Mammary epithelial cell (primary cell): ENCODE measurements at regions of chr6 and their contacts with region 1.

Region 1: GRCh38 chr6:34067814-34068213 is 78.1 kb downstream of the GRM4 start:
- DNase-seq: no peak
- H3K4me3 ChIP-seq: no peak overlapping the region
- H3K27ac ChIP-seq: no peak overlapping the region
- H3K4me1 ChIP-seq: no peaks in the 10 kb centered on the region
- H3K27me3 ChIP-seq: peaks cover 14% of the 10 kb centered on the region
- CTCF ChIP-seq: no peak

Region 2: DNA sequence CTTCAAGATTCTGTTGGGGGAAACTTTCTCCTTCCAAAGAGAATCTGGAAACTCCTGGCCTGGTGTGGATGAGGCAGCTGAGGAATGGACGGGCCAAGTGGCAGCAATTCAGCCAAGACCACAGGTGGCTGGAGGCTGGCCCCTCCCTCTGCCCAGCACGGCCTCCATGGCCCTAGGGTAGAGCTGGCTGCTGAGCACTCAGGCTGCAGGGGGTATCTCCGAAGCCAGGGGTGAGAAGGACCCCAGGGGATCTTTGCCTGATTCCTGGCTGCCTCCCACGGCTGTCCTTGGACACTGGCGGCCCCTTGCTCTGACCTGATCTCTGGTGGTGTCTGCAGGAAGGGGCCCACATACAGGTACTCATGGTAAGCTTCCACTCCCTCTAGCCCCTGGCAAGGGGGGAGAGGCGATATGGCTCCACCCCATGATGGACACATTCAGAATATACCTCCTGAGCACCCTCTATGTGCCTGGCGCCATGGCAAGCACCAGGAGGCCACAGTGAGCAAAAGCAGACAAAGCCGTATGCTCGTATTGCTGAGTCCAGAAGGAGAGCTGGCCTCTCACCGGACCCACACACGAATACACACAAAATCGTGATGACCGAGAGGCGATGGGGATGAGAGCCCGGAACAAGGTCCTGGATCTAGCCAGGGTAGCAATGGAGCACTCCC is 39.2 kb after region 1 on chr6:
- CTCF ChIA-PET with region 1: no interaction called
- dilution Hi-C with region 1: loop called (anchors 5 kb)
- in situ Hi-C with region 1: no loop called
- intact Hi-C with region 1: no loop called
- DNase-seq: no peak
- H3K4me3 ChIP-seq: no peak overlapping the region
- H3K27ac ChIP-seq: no peak overlapping the region
- H3K4me1 ChIP-seq: no peaks in the 10 kb centered on the region
- H3K27me3 ChIP-seq: peaks cover 4% of the 10 kb centered on the region
- CTCF ChIP-seq: no peak

Region 3: GRCh38 chr6:34143884-34144580 is 76.2 kb after region 1 on chr6:
- CTCF ChIA-PET with region 1: no interaction called
- dilution Hi-C with region 1: loop called (anchors 5 kb)
- in situ Hi-C with region 1: no loop called
- intact Hi-C with region 1: no loop called
- DNase-seq: no peak
- H3K4me3 ChIP-seq: peak overlapping the region in 1 of 3 experiments; percentile 9
- H3K27ac ChIP-seq: no peak overlapping the region
- H3K4me1 ChIP-seq: peaks cover 23% of the 10 kb centered on the region
- H3K27me3 ChIP-seq: peaks cover 28% of the 10 kb centered on the region
- CTCF ChIP-seq: no peak

Region 4: DNA sequence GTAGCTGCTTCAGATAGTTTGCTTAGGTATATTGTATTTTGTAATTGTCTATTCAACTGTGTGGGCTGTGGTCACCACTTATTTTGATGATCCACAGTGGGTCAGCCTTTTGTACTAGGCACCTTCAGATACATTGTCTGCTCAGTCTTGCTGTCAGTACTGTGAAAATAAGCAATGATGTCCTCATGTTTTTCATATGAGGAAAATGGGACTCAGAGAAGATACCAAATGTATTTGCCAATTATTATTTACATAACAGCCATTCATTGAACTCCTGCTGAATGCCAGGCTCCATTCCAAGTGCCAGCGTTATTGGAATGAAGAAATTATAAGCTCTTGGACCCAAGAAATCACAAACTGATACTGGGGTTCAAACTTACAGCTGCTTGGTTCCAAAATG is 1988.4 kb after region 1 on chr6:
- CTCF ChIA-PET with region 1: interaction called, 14 read pairs
- dilution Hi-C with region 1: no loop called
- in situ Hi-C with region 1: no loop called
- intact Hi-C with region 1: no loop called
- DNase-seq: no peak
- H3K4me3 ChIP-seq: no peak overlapping the region
- H3K27ac ChIP-seq: no peak overlapping the region
- H3K4me1 ChIP-seq: peaks cover 4% of the 10 kb centered on the region
- H3K27me3 ChIP-seq: no peaks in the 10 kb centered on the region
- CTCF ChIP-seq: no peak